ENCODE measurements at regions of chr10 and their contacts with region 1.

Region 1: GRCh38 chr10:113678690-113679462 is 836 bp upstream of the CASP7 start:
- DNase-seq: peak; percentile 68
- ATAC-seq: peak; percentile 9
- H3K4me3 Mint-ChIP-seq: peak overlapping the region; percentile 92
- H3K27ac Mint-ChIP-seq: peak overlapping the region; percentile 94
- H3K4me1 Mint-ChIP-seq: peaks cover 48% of the 10 kb centered on the region
- H3K27me3 Mint-ChIP-seq: no peaks in the 10 kb centered on the region
- CTCF ChIP-seq: no peak

Region 2: DNA sequence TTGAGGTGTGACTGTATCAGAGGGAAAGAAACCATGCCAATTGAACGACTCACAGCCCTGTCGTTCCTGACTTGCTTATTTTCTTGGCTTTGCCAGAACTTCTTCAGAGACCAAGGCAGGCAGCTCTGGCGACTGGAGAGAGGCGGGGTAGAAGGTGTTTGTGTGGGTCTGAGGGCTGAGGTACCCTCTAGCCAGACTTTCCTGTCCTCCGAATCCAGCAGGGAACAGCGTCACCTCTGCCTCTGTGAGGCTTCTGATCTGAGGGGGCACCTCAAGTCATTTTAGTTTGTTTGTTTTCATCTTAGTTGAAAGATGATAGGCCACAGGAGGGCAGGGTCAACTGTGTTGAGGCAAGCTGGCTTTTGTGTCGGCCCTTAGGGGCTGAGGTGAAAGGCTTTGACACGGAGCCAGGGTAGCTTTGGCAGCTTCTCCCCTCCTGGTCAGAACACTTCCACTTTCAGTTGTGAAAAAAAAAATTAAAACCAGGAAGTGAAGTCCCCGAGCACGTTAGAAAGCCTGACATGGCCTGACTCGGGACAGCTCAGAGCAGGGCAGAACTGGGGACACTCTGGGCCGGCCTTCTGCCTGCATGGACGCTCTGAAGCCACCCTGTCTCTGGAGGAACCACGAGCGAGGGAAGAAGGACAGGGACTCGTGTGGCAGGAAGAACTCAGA is 1303.0 kb before region 1 on chr10:
- CTCF ChIA-PET with region 1: no interaction called
- POLR2A ChIA-PET with region 1: no interaction called
- intact Hi-C with region 1: loop called (anchors 5 kb)
- DNase-seq: peak; percentile 47
- ATAC-seq: peak; percentile 85
- H3K4me3 Mint-ChIP-seq: peak overlapping the region; percentile 100
- H3K27ac Mint-ChIP-seq: peak overlapping the region; percentile 99
- H3K4me1 Mint-ChIP-seq: peaks cover 61% of the 10 kb centered on the region
- H3K27me3 Mint-ChIP-seq: no peaks in the 10 kb centered on the region
- CTCF ChIP-seq: no peak

Region 3: DNA sequence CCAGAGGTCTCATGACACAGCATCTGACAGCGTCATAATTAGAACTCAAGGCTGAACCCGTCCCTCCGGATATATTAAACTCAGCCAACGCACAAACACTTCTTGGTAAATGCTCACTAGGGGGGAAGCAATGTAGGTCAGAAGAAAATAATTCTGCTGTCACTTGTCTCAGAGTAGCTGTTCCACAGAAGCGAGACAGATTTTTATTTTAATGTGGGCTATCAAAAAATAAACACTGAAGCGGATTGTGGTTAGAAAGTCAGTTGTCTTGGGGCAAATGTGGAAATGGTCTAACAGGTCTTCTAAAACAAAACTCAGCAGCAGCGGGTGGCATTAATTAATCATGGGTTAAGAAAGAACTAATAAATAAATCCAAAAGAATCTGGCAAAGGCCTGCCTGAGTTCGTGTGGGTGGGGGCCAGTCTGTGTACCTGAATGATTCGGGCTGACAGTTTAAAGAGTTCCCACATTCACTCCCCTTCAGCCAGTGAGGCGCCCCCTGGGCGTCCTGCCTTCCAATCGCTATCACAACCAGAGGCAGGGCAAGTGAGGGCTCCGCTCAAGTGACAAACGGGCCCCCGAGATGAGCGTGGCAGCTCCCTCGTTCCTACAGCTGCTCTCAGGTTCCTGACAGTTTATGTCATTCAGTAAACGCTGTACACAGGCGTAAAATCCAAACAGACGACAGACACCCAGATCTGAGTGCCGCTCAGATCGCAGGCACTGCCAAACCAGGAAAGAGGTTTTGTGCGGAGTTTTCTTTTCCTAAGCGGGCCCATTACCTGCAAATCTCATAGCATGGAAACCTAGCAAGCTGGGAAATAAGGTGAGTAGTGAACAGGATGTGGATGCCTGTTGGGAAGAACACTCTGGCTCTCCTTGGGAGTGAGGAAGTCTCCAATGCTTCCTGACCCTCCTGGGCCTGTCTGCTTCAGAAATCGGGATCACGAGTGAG is 68.0 kb before region 1 on chr10:
- CTCF ChIA-PET with region 1: no interaction called
- POLR2A ChIA-PET with region 1: no interaction called
- intact Hi-C with region 1: no loop called
- DNase-seq: no peak
- ATAC-seq: no peak
- H3K4me3 Mint-ChIP-seq: no peak overlapping the region
- H3K27ac Mint-ChIP-seq: no peak overlapping the region
- H3K4me1 Mint-ChIP-seq: no peaks in the 10 kb centered on the region
- H3K27me3 Mint-ChIP-seq: peaks cover 10% of the 10 kb centered on the region
- CTCF ChIP-seq: no peak

Region 4: DNA sequence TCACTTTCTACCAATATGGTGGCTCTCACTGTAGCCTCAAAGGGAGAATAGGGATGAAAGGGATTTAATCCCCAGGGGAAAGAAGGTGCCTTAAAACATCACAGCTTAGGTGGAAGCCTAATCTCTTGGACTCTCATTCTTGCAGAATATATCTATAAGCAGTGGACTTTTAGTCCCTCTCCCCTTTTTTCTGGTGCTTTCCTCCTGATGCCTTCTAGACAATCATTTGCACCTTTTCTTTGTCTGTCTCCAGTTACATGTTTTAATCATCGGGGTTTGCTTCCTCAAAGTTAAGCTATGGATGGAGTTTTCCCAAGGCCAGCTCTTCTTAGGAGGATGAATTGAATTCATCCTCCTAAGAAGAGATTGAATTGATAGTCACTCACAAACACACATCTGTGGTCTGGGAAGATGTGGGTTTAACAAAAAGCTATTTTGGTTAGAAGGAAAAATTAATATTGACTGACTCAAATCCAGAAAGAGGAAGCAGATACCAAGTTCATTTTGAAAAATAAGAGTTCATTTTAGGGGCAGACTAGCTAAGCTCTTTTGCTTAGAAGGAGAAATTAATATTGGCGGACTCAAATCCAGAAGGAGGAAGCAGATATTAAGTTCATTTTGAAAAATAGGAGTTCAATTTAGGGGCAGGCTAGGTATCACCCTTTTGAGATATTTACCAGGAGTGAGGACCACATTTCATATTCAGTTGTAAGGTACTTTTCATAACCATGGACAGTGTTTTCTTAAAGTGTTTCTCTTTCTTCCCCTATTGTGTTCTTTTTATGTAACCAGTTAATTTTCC is 37.4 kb after region 1 on chr10:
- CTCF ChIA-PET with region 1: interaction called, 6 read pairs
- POLR2A ChIA-PET with region 1: no interaction called
- intact Hi-C with region 1: loop called (anchors 2 kb)
- DNase-seq: no peak
- ATAC-seq: no peak
- H3K4me3 Mint-ChIP-seq: no peak overlapping the region
- H3K27ac Mint-ChIP-seq: no peak overlapping the region
- H3K4me1 Mint-ChIP-seq: peaks cover 13% of the 10 kb centered on the region
- H3K27me3 Mint-ChIP-seq: no peaks in the 10 kb centered on the region
- CTCF ChIP-seq: no peak

Region 5: DNA sequence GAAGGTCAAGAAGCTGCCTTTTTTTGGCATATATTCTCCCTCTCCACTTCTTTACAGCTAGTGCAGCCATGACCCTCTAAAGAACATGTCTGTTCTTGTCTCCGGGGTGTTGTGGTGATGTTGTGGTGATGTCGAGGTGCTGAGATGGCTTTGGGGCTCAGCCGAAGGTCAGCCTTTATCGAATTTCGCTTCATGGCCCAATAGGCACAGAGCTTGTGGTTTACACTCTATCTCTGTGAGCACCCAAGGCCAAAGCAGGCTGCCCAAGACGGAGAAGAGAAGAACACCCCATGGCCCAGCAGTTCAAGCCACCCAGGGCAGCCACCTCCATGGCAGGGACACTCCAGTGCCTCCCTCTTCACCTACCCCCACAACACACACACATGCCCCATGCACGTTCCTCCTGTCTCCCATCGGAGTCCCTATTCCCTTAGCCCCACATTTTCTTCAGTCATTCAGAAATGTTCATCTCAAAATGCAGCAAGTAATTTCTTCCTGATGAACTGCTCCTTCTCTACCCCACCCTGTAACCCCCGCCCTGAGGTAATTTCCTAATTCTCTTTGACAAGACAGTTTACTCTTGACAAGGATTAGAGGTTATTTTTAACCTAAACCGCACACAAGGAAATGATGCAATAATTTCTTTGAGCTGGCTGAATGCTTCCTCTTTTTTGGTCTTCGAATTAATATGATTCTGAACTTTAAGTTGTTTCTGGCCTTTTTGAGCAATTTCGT is 346.2 kb after region 1 on chr10:
- CTCF ChIA-PET with region 1: no interaction called
- POLR2A ChIA-PET with region 1: interaction called, 4 read pairs
- intact Hi-C with region 1: loop called (anchors 1 kb)
- DNase-seq: peak; percentile 25
- ATAC-seq: peak; percentile 80
- H3K4me3 Mint-ChIP-seq: peak overlapping the region; percentile 71
- H3K27ac Mint-ChIP-seq: peak overlapping the region; percentile 82
- H3K4me1 Mint-ChIP-seq: peaks cover 33% of the 10 kb centered on the region
- H3K27me3 Mint-ChIP-seq: peaks cover 5% of the 10 kb centered on the region
- CTCF ChIP-seq: no peak

Region 6: GRCh38 chr10:114304017-114304570 is 625.2 kb after region 1 on chr10:
- CTCF ChIA-PET with region 1: no interaction called
- POLR2A ChIA-PET with region 1: no interaction called
- intact Hi-C with region 1: loop called (anchors 1 kb)
- DNase-seq: peak; percentile 46
- ATAC-seq: peak; percentile 53
- H3K4me3 Mint-ChIP-seq: peak overlapping the region; percentile 86
- H3K27ac Mint-ChIP-seq: peak overlapping the region; percentile 47
- H3K4me1 Mint-ChIP-seq: peaks cover 12% of the 10 kb centered on the region
- H3K27me3 Mint-ChIP-seq: no peaks in the 10 kb centered on the region
- CTCF ChIP-seq: peak; percentile 15

Region 7: GRCh38 chr10:114937962-114938855 is 1259.3 kb after region 1 on chr10 and contains the start of gene TRUB1:
- CTCF ChIA-PET with region 1: no interaction called
- POLR2A ChIA-PET with region 1: no interaction called
- intact Hi-C with region 1: loop called (anchors 5 kb)
- DNase-seq: peak; percentile 72
- ATAC-seq: peak; percentile 100
- H3K4me3 Mint-ChIP-seq: peak within 1 kb of the TSS; percentile 97
- H3K27ac Mint-ChIP-seq: peak within 1 kb of the TSS; percentile 95
- H3K4me1 Mint-ChIP-seq: peaks cover 24% of the 10 kb centered on the region
- H3K27me3 Mint-ChIP-seq: peaks cover 2% of the 10 kb centered on the region
- CTCF ChIP-seq: no peak
- total RNA-seq, gene TRUB1: 13.0 and 13.9 TPM in 2 replicates